Mammary epithelial cell (primary cell): ENCODE measurements at regions of chr1 and their contacts with region 1.

Region 1: DNA sequence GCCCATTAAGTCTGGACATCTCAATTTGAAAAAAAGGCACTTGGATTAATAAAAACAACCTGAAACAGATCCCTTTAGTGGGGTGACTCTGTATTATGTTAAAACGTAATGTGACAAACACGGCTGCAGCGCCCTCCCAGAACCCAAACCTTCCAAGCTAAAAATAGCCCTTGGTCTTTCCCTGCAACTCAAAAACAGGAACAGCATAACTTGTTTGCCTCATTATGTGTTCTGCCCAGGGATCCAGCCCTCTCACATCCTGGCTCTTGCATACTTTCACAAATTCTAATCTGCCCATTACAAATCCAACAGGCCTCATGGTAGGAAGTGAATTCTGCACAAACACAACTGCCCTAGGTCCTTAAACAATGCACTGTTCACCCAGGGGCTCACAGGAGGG is 94.7 kb upstream of the GADD45A start:
- DNase-seq: no peak
- H3K4me3 ChIP-seq: no peak overlapping the region
- H3K27ac ChIP-seq: no peak overlapping the region
- H3K4me1 ChIP-seq: no peaks in the 10 kb centered on the region
- H3K27me3 ChIP-seq: no peaks in the 10 kb centered on the region
- CTCF ChIP-seq: no peak

Region 2: DNA sequence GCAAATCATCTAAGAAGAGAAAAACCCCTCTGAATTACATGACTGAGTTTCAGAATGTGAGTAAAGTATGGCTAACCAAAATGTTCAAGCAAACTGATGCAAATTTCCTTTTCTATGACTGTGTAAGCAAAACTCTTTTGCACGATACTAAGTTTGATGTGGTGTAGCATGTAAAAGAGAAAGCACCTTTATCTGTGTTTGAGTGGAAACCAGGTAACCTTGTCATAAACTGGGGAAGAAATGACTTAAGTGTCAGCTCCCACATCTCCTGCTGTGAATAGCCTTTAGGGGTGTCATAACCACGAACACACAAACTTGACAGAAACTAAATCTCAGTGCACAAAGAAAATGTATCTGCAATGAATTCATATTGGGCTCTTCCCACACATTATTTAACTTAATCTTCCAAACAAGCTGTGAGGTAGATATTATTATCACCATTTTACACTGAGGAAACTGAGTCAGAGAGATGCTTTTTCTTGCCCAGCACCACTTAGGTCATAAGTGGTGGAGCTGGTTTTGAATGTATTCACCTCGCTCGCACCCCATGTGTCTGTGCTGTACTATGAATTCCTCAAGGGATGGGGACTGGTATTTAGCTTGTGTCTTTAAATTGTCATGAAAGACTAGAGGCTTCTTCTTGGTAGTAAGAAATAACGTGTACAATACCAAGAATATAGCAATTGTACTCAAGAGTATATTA is 315.6 kb before region 1 on chr1:
- CTCF ChIA-PET with region 1: interaction called, 15 read pairs
- dilution Hi-C with region 1: no loop called
- in situ Hi-C with region 1: no loop called
- intact Hi-C with region 1: no loop called
- DNase-seq: no peak
- H3K4me3 ChIP-seq: no peak overlapping the region
- H3K27ac ChIP-seq: no peak overlapping the region
- H3K4me1 ChIP-seq: no peaks in the 10 kb centered on the region
- H3K27me3 ChIP-seq: no peaks in the 10 kb centered on the region
- CTCF ChIP-seq: no peak

Region 3: GRCh38 chr1:67376381-67376780 is 213.9 kb before region 1 on chr1:
- CTCF ChIA-PET with region 1: no interaction called
- dilution Hi-C with region 1: no loop called
- in situ Hi-C with region 1: no loop called
- intact Hi-C with region 1: no loop called
- DNase-seq: peak; percentile 57
- H3K4me3 ChIP-seq: no peak overlapping the region
- H3K27ac ChIP-seq: no peak overlapping the region
- H3K4me1 ChIP-seq: peaks cover 6% of the 10 kb centered on the region
- H3K27me3 ChIP-seq: no peaks in the 10 kb centered on the region
- CTCF ChIP-seq: no peak